Activated B cell treated with CpG ODN at 0.5 μM for 24 hours (primary cell): ENCODE measurements at regions of chr6 and their contacts with region 1.

Region 1: GRCh38 chr6:116100419-116101301 is at the start of gene NT5DC1:
- DNase-seq: peak; percentile 86
- ATAC-seq: peak; percentile 92
- H3K4me3 Mint-ChIP-seq: peak within 1 kb of the TSS; percentile 88
- H3K27ac Mint-ChIP-seq: peak within 1 kb of the TSS; percentile 92
- H3K4me1 Mint-ChIP-seq: peaks cover 52% of the 10 kb centered on the region
- H3K27me3 Mint-ChIP-seq: no peaks in the 10 kb centered on the region
- CTCF ChIP-seq: no peak
- total RNA-seq, gene NT5DC1: 59.9 and 61.6 TPM in 2 replicates

Region 2: GRCh38 chr6:114096561-114097172 is 2004.0 kb before region 1 on chr6:
- CTCF ChIA-PET with region 1: no interaction called
- POLR2A ChIA-PET with region 1: no interaction called
- intact Hi-C with region 1: loop called (anchors 10 kb)
- DNase-seq: no peak
- ATAC-seq: no peak
- H3K4me3 Mint-ChIP-seq: no peak overlapping the region
- H3K27ac Mint-ChIP-seq: no peak overlapping the region
- H3K4me1 Mint-ChIP-seq: no peaks in the 10 kb centered on the region
- H3K27me3 Mint-ChIP-seq: peaks cover 2% of the 10 kb centered on the region
- CTCF ChIP-seq: peak; percentile 87

Region 3: DNA sequence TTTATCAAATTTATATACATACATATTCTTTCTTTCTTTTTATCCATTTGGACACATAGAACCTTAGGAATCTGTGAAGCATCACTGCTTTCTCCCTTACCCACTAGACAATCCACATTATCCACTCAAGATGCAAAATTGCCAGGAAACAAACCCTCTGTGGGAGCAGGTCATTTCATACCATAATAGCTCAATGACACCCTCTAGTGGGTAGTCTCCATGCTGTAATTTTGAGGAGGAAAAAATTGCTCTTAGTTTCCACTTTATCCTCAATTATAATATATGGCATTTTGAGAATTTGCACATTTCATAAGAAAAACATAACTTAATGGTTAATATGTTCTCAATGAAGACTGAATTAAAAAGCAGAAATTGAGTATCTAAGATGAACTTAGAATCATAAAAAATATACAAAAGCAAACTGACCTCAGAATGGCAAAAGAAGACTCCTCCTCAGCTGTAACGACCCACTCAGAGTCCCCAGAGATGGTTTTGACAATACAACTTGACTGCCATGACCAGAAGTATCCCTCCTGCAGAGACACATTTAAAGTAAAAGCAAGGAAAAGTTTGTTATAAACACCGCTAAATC is 204.0 kb before region 1 on chr6:
- CTCF ChIA-PET with region 1: interaction called, 5 read pairs
- POLR2A ChIA-PET with region 1: no interaction called
- intact Hi-C with region 1: loop called (anchors 2 kb)
- DNase-seq: no peak
- ATAC-seq: no peak
- H3K4me3 Mint-ChIP-seq: no peak overlapping the region
- H3K27ac Mint-ChIP-seq: no peak overlapping the region
- H3K4me1 Mint-ChIP-seq: no peaks in the 10 kb centered on the region
- H3K27me3 Mint-ChIP-seq: peaks cover 4% of the 10 kb centered on the region
- CTCF ChIP-seq: no peak

Region 4: GRCh38 chr6:116016846-116017545 is 83.7 kb before region 1 on chr6:
- CTCF ChIA-PET with region 1: interaction called, 142 read pairs
- POLR2A ChIA-PET with region 1: interaction called, 29 read pairs
- intact Hi-C with region 1: loop called (anchors 2 kb)
- DNase-seq: no peak
- ATAC-seq: no peak
- H3K4me3 Mint-ChIP-seq: peak overlapping the region; percentile 52
- H3K27ac Mint-ChIP-seq: peak overlapping the region; percentile 71
- H3K4me1 Mint-ChIP-seq: peaks cover 59% of the 10 kb centered on the region
- H3K27me3 Mint-ChIP-seq: no peaks in the 10 kb centered on the region
- CTCF ChIP-seq: no peak

Region 5: DNA sequence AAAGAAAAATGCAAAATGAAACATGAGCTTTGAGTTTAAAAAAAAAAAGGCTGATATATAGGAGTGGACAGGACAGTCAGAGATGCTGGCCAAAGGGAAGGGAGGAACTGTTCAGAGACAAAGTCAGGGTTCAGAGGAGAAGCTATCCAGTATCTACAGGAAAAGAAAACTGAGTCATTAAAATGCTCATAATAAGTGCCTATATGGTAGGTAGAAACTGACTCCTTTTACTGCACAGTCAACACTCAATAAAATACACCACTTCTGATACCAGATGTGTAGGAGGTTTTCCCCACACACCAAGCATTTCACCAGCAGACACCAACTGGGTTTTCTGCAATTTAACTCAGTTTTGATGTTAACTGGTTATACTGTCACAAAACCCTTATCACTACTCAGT is 72.9 kb before region 1 on chr6:
- CTCF ChIA-PET with region 1: no interaction called
- POLR2A ChIA-PET with region 1: no interaction called
- intact Hi-C with region 1: no loop called
- DNase-seq: no peak
- ATAC-seq: no peak
- H3K4me3 Mint-ChIP-seq: no peak overlapping the region
- H3K27ac Mint-ChIP-seq: no peak overlapping the region
- H3K4me1 Mint-ChIP-seq: peaks cover 5% of the 10 kb centered on the region
- H3K27me3 Mint-ChIP-seq: peaks cover 3% of the 10 kb centered on the region
- CTCF ChIP-seq: no peak

Region 6: DNA sequence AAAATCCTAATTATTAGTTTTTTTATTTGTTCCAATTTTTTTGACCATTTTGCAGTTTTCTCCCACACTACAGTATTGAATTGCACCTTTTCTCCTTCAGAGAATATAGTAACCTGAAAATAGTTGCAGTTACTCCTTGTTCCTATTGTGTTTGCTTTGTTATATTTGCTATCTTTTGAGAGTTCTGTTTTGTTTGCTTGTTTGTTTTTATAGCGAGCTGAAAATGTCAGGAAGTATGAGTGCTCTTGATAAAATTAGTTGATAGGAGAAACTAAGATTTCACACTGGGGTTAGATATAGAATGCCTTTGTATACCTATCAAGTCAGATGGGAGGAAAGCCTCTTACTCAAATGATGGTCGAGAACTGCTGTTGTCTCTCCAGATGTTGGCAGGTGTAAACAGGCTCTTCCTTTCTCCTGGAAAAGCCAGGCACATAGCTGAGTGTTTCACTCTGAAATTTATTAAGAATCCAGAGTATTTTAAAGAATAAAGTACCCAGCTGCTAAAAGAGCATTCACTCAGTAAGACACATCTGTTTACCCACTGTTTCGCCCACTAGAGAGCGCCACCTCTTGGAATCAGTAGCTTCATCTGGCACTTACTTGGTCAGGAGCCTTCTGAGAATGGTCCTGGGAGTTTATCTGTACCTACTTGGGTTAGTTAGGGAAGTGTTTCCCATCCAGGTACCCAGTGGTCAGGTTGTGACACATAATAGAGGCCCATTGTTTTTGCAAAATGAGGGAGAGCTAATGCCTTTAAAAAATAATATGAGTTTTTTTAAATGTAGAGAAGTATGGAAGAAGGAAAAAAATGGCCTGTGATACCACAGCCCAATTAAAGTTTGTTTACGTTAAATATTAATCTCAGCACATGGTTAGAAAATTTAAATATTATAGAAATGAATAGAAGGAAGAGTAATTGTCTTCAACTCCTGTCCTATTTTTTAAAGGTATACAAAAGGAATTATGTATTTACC is 11.2 kb after region 1 on chr6:
- CTCF ChIA-PET with region 1: interaction called, 8 read pairs
- POLR2A ChIA-PET with region 1: interaction called, 7 read pairs
- intact Hi-C with region 1: loop called (anchors 1 kb)
- DNase-seq: no peak
- ATAC-seq: no peak
- H3K4me3 Mint-ChIP-seq: no peak overlapping the region
- H3K27ac Mint-ChIP-seq: no peak overlapping the region
- H3K4me1 Mint-ChIP-seq: peaks cover 2% of the 10 kb centered on the region
- H3K27me3 Mint-ChIP-seq: no peaks in the 10 kb centered on the region
- CTCF ChIP-seq: no peak

Region 7: DNA sequence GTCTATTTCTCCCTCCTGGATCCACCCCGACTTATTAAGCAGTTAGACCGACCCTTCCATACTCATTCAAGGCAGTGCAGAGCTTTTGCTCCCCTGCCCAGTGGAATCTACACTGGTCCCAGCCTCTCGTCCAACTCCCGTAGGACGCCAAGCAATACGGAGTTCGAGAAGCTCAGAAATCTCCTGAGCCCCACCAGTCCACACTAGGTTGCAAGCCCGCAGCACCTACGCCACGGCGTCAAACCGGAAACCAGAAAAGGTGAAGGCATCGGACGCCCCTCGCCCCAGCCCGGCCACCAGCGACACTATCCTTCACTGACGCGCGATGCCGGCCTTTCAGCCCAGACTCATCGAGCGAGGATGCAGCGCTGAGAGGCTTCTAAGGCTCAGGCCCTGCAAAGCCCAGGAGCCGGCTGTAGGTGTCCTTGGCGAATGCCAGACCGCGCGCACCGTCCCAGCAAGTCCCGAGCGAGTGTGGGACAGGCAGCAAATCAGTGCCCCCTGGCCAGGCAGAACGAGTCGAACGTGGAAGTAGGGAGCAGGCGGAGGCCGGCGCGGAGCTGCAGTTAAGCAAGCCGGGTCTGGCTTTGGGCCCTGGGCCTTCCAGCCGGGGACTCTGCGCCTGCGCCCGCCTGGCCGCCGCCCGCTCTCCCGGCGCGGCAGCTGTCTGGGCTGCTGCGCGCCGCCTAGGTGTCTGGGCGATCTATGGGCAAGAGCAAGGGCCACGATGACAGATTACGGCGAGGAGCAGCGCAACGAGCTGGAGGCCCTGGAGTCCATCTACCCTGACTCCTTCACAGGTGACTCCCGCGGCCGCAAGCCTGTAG is 470.4 kb after region 1 on chr6 and contains the start of gene RWDD1:
- CTCF ChIA-PET with region 1: no interaction called
- POLR2A ChIA-PET with region 1: interaction called, 5 read pairs
- intact Hi-C with region 1: loop called (anchors 5 kb)
- DNase-seq: peak; percentile 94
- ATAC-seq: peak; percentile 94
- H3K4me3 Mint-ChIP-seq: peak within 1 kb of the TSS; percentile 95
- H3K27ac Mint-ChIP-seq: peak within 1 kb of the TSS; percentile 96
- H3K4me1 Mint-ChIP-seq: peaks cover 51% of the 10 kb centered on the region
- H3K27me3 Mint-ChIP-seq: no peaks in the 10 kb centered on the region
- CTCF ChIP-seq: no peak
- total RNA-seq, gene RWDD1: 30.9 and 33.8 TPM in 2 replicates

Region 8: GRCh38 chr6:116680975-116681808 is 580.5 kb after region 1 on chr6 and contains the start of gene KPNA5:
- CTCF ChIA-PET with region 1: no interaction called
- POLR2A ChIA-PET with region 1: no interaction called
- intact Hi-C with region 1: loop called (anchors 5 kb)
- DNase-seq: peak; percentile 89
- ATAC-seq: peak; percentile 92
- H3K4me3 Mint-ChIP-seq: peak within 1 kb of the TSS; percentile 99
- H3K27ac Mint-ChIP-seq: peak within 1 kb of the TSS; percentile 99
- H3K4me1 Mint-ChIP-seq: peaks cover 40% of the 10 kb centered on the region
- H3K27me3 Mint-ChIP-seq: no peaks in the 10 kb centered on the region
- CTCF ChIP-seq: no peak
- total RNA-seq, gene KPNA5: 25.0 and 29.9 TPM in 2 replicates